BJ (cell line): ENCODE measurements at regions of chr7 and their contacts with region 1.

Region 1: DNA sequence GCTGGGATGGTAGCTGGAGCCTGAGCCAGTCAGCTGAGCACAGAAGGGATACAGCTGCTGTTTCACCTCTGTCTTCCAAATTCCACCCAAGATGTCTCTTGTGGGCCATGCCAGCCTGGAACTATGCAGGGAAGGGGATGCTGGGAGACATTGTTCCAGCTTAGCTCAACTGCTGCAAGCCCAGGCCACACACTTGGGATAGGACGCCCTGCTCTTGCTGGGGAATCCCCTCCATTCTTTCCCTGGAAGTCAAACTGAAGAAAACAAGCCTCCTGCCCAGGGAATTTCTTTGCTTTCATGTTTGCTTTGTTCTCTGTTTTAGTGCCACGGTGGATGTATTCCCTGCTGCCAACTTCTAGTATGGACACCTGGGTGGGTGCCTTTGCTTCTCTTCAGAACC is 55.2 kb upstream of the CDK13 start:
- DNase-seq: no peak
- H3K4me3 ChIP-seq: no peak overlapping the region
- H3K27me3 ChIP-seq: peaks cover 10% of the 10 kb centered on the region
- CTCF ChIP-seq: no peak

Region 2: GRCh38 chr7:40047661-40048060 is 152.8 kb after region 1 on chr7:
- CTCF ChIA-PET with region 1: interaction called, 147 read pairs
- POLR2A ChIA-PET with region 1: interaction called, 6 read pairs
- DNase-seq: no peak
- H3K4me3 ChIP-seq: no peak overlapping the region
- H3K27me3 ChIP-seq: no peaks in the 10 kb centered on the region
- CTCF ChIP-seq: no peak; the same call in 1 of the 2 replicates